Activated T-helper 2 cell treated with anti-CD3 and anti-CD28 coated beads, Interferon-gamma antibody, Interleukin-2, Interleukin-4, amounts not matched to agents 10 μg/mL and 5 μg/mL and 100 μg/mL, durations not matched to agents 14 hours and 24 hours and 36 hours (primary cell): ENCODE measurements at regions of chr7 and their contacts with region 1.

Region 1: DNA sequence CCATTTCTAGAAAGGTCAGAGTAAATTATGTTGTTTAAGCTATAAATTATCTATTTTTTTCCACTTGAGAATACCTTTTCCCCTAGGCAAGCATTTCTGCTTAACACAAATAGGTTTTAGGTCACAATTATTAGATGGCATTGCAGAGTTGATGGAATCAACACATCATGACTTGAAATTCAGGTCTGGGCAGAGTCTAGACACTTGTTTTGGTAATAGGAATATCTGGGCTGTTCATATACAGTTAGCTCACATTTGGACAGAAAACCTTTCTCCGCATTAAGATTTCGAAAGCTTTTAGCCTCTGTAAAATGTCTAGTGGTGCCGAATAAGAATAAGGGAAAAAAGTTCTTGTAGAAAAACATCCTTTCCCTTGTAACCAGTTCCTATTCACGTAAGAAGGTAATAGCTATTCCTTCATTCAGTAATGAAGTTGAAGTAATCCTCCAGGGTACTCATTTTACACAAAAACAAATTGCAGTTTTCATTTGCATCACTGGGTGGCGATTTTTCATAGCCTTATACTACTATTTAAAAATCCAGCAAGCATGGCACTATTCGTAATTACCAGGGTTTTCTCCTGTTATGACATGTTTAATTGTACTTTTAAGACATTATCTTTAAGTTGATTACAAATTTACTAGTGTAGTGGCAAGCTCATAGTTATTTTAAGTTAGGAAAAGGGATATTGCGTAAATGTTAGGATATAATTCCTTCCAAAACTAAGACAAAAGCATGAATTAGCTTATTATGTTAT is 37.0 kb downstream of the RPA3 start:
- DNase-seq: no peak
- H3K4me3 Mint-ChIP-seq: no peak overlapping the region
- H3K27ac Mint-ChIP-seq: peak overlapping the region; percentile 36
- H3K4me1 Mint-ChIP-seq: peaks cover 16% of the 10 kb centered on the region
- H3K27me3 Mint-ChIP-seq: no peaks in the 10 kb centered on the region

Region 2: DNA sequence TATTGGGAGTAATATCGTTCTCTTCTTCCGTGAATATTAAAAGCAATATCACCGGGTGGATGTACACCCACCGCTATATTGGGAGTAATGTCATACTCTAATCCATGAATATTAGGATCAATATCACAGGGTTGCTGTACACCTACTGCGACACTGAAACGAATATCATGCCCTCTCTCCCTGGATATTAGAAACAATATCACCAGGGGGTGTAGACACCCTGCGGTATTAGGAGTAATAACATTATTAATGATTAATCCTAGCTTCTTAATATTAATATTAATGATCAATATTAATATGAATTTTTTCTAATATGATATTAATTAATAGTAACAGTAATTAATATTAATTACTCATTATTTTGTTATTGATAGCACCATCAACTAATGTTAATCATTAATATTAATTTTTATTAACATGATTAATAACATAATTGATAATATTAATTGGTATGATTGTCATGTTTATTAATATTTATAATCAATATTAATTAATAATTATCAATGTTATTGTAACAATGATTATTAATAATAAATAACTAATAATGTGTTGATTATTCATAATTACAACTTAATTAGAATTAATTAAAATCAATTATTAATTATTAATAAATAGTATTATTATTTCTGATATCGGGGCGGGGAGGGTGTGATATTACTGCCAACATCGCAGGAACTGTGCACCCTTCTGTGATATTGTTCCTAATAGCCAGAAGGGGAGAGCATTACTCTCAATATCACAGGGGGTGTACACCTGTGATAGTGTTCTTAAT is 620.3 kb before region 1 on chr7:
- intact Hi-C with region 1: loop called (anchors 5 kb)
- DNase-seq: no peak
- H3K4me3 Mint-ChIP-seq: no peak overlapping the region
- H3K27ac Mint-ChIP-seq: no peak overlapping the region
- H3K4me1 Mint-ChIP-seq: no peaks in the 10 kb centered on the region
- H3K27me3 Mint-ChIP-seq: no peaks in the 10 kb centered on the region

Region 3: DNA sequence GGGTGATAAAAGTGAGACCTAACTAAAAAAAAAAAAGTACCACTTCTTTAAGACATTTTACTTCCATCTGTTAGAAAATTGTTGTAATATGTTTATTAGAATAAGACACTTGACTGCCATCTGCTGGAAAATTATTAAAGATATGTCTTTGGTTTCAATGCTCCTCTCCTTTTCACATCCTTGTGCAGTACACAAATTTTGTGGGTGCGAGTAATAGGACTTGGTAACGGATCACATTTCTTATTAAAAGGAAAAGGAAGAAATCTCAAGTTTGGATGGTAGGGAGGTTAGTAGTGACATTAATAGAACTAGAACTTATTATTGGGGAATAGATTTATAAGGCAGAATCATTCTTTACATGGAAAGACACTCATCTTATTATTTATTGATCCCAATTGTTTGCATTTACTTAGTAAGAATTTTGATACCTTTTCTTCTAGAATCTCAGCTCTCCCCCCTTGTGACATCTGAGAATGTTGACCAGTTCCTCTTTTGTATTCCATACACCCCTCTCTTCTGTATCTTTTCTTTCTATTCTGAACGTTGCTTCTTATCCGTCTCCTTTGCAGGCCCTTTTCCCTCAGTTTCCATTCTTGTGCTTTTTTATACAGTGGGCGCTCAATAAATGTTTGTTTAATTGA is 80.1 kb after region 1 on chr7:
- intact Hi-C with region 1: loop called (anchors 1 kb)
- DNase-seq: no peak
- H3K4me3 Mint-ChIP-seq: peak overlapping the region; percentile 86
- H3K27ac Mint-ChIP-seq: peak overlapping the region; percentile 83
- H3K4me1 Mint-ChIP-seq: peaks cover 38% of the 10 kb centered on the region
- H3K27me3 Mint-ChIP-seq: no peaks in the 10 kb centered on the region

Region 4: DNA sequence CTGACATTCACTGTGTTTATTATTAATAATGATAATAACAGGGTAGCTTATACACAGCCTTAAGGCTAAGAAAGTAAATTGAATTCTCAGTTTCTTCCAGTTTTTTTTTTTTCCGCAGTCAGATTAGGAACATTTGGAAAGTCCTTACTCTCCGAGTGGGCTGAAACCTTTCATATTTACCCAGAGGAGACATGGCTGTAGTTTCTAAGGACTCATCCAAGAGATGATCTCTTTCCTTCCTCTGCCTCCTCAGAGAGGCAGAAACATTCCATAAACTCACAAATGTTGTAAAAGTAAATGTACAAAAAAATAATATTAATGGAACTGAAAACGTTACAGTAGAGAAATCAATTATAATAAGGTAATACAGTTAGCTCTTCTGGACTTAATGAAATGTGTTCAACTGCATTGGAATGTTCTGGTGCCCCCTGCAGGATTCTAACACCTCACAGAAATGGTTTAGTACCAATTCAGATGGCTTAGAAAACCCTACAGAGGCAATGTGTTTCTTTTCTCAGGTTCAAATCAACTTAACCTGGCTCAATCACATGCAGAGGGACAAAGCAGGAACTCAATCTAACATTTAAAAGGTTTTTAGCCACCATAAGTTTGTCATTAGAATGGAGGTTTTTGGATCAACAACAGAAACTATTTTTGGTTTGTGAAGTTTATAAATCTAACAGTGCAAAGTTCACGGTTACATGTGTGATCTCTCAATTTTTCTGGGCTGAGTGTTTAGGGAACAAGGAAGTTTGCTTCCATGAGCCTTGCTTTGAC is 508.9 kb after region 1 on chr7:
- intact Hi-C with region 1: loop called (anchors 2 kb)
- DNase-seq: peak; percentile 32
- H3K4me3 Mint-ChIP-seq: no peak overlapping the region
- H3K27ac Mint-ChIP-seq: no peak overlapping the region
- H3K4me1 Mint-ChIP-seq: peaks cover 45% of the 10 kb centered on the region
- H3K27me3 Mint-ChIP-seq: no peaks in the 10 kb centered on the region

Region 5: GRCh38 chr7:8295638-8296361 is 614.4 kb after region 1 on chr7:
- intact Hi-C with region 1: loop called (anchors 2 kb)
- DNase-seq: peak; percentile 14
- H3K4me3 Mint-ChIP-seq: no peak overlapping the region
- H3K27ac Mint-ChIP-seq: no peak overlapping the region
- H3K4me1 Mint-ChIP-seq: peaks cover 2% of the 10 kb centered on the region
- H3K27me3 Mint-ChIP-seq: peaks cover 12% of the 10 kb centered on the region